Tibial artery (tissue), 4 donors: ENCODE measurements at regions of chr1 and their contacts with region 1.

Region 1: GRCh38 chr1:44848456-44849181 is 5.6 kb upstream of the PTCH2 start:
- DNase-seq: no peak
- H3K4me3 ChIP-seq: no peak overlapping the region
- H3K27ac ChIP-seq: no peak overlapping the region
- H3K4me1 ChIP-seq: peaks cover 0 to 4% (median 0%) of the 10 kb centered on the region in 4 donors
- H3K27me3 ChIP-seq: no peaks in the 10 kb centered on the region
- CTCF ChIP-seq: no peak

Region 2: GRCh38 chr1:45001011-45001481 is 152.4 kb after region 1 on chr1:
- intact Hi-C with region 1: loop called (anchors 5 kb)
- DNase-seq: no peak
- H3K4me3 ChIP-seq: no peak overlapping the region
- H3K27ac ChIP-seq: no peak overlapping the region
- H3K4me1 ChIP-seq: peaks cover 0 to 10% (median 0%) of the 10 kb centered on the region in 4 donors
- H3K27me3 ChIP-seq: no peaks in the 10 kb centered on the region
- CTCF ChIP-seq: no peak